Naive thymus-derived CD4-positive, alpha-beta T cell (primary cell): ENCODE measurements at regions of chr19 and their contacts with region 1.

Region 1: GRCh38 chr19:20776083-20777076 is at the start of gene ZNF66:
- DNase-seq: peak; percentile 84 to 96 (median 95)
- ATAC-seq: peak; percentile 99
- H3K4me3 ChIP-seq: peak within 1 kb of the TSS; percentile 99
- H3K4me3 Mint-ChIP-seq: peak within 1 kb of the TSS; percentile 92 to 100 (median 99)
- H3K27ac ChIP-seq: peak within 1 kb of the TSS; percentile 81
- H3K27ac Mint-ChIP-seq: peak within 1 kb of the TSS; percentile 86 to 97 (median 93)
- H3K4me1 ChIP-seq: peaks cover 0 to 5% of the 10 kb centered on the region in 2 donors
- H3K4me1 Mint-ChIP-seq: peaks cover 3 to 44% (median 31%) of the 10 kb centered on the region in 7 donors
- H3K27me3 ChIP-seq: no peaks in the 10 kb centered on the region
- H3K27me3 Mint-ChIP-seq: no peaks in the 10 kb centered on the region
- total RNA-seq, gene ZNF66: 7.6 to 18.5 (median 12.2) TPM

Region 2: DNA sequence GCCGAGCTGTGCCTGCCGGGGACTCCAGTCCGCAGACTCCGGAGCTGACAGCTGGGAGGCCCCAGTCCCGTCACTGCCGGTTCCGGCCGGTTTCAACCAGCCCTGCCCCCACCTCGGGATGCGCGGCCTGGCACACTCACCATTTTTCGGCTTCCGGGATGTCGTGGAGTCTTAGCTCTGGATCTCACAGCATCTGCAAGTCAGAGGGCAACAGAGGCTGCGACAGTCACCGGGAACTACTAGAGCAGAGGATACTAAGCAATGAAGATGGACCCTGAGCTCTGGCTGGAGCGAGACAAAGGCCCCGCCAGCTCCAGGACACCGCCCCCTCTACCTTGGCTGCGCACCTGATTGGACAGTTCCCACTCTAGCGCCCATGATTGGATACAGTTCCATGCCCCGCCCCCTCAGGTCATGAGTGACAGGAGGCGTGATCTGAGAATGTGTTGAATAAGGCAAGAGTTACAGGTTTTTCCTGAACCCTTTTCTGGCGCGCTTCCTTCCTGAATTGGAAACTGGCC is 737.1 kb before region 1 on chr19 and contains the start of gene ZNF682:
- CTCF ChIA-PET with region 1: no interaction called
- POLR2A ChIA-PET with region 1: no interaction called
- intact Hi-C with region 1: loop called in 1 of 2 experiments (anchors 1 kb)
- DNase-seq: peak; percentile 83 to 96 (median 94)
- ATAC-seq: peak; percentile 100
- H3K4me3 ChIP-seq: peak within 1 kb of the TSS; percentile 90
- H3K4me3 Mint-ChIP-seq: peak within 1 kb of the TSS; percentile 92 to 99 (median 96)
- H3K27ac ChIP-seq: peak within 1 kb of the TSS; percentile 81
- H3K27ac Mint-ChIP-seq: peak within 1 kb of the TSS; percentile 86 to 98 (median 94)
- H3K4me1 ChIP-seq: no peaks in the 10 kb centered on the region
- H3K4me1 Mint-ChIP-seq: peaks cover 5 to 27% (median 25%) of the 10 kb centered on the region in 7 donors
- H3K27me3 ChIP-seq: no peaks in the 10 kb centered on the region
- H3K27me3 Mint-ChIP-seq: peaks cover 0 to 5% (median 0%) of the 10 kb centered on the region in 5 donors
- total RNA-seq, gene ZNF682: 5.3 to 13.0 (median 9.5) TPM

Region 3: GRCh38 chr19:20237761-20238623 is 538.4 kb before region 1 on chr19:
- CTCF ChIA-PET with region 1: no interaction called
- POLR2A ChIA-PET with region 1: no interaction called
- intact Hi-C with region 1: loop called in 1 of 2 experiments (anchors 5 kb)
- DNase-seq: peak; percentile 70 to 90 (median 83)
- ATAC-seq: peak; percentile 97
- H3K4me3 ChIP-seq: peak overlapping the region; percentile 71
- H3K4me3 Mint-ChIP-seq: peak overlapping the region; percentile 83 to 98 (median 96)
- H3K27ac ChIP-seq: peak overlapping the region; percentile 63
- H3K27ac Mint-ChIP-seq: peak overlapping the region; percentile 55 to 95 (median 87)
- H3K4me1 ChIP-seq: peaks cover 0 to 4% of the 10 kb centered on the region in 2 donors
- H3K4me1 Mint-ChIP-seq: peaks cover 5 to 12% (median 10%) of the 10 kb centered on the region in 7 donors
- H3K27me3 ChIP-seq: no peaks in the 10 kb centered on the region
- H3K27me3 Mint-ChIP-seq: no peaks in the 10 kb centered on the region

Region 4: GRCh38 chr19:20661150-20661819 is 115.1 kb before region 1 on chr19 and contains the start of gene ZNF626:
- CTCF ChIA-PET with region 1: no interaction called
- POLR2A ChIA-PET with region 1: interaction called, 7 read pairs
- intact Hi-C with region 1: loop called in 1 of 2 experiments (anchors 1 kb)
- DNase-seq: peak; percentile 66 to 92 (median 87)
- ATAC-seq: peak; percentile 99
- H3K4me3 ChIP-seq: peak within 1 kb of the TSS; percentile 89
- H3K4me3 Mint-ChIP-seq: peak within 1 kb of the TSS; percentile 83 to 97 (median 92)
- H3K27ac ChIP-seq: peak within 1 kb of the TSS; percentile 91
- H3K27ac Mint-ChIP-seq: peak within 1 kb of the TSS; percentile 86 to 97 (median 95)
- H3K4me1 ChIP-seq: peaks cover 0 to 6% of the 10 kb centered on the region in 2 donors
- H3K4me1 Mint-ChIP-seq: peaks cover 0 to 54% (median 47%) of the 10 kb centered on the region in 7 donors
- H3K27me3 ChIP-seq: no peaks in the 10 kb centered on the region
- H3K27me3 Mint-ChIP-seq: no peaks in the 10 kb centered on the region
- total RNA-seq, gene ZNF626: 2.2 to 20.0 (median 12.4) TPM

Region 5: DNA sequence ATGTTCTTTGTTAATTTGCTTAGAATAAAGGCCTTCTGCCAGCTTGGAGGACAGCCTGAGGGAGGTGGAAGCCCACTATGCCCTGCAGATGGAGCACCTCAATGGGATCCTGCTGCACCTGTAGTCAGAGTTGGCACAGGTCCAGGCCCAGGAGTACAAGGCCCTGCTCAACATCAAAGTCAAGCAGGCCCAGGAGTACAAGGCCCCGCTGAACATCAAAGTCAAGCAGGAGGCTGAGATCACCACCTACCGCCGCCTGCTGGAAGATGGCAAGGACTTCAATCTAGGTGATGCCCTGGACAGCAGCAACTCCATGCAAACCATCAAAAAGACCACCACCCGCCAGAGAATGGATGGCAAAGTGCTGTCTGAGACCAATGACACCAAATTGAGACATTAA is 188.4 kb after region 1 on chr19:
- CTCF ChIA-PET with region 1: no interaction called
- POLR2A ChIA-PET with region 1: no interaction called
- intact Hi-C with region 1: no loop called
- DNase-seq: peak in 1 of 9 donors; percentile 0
- ATAC-seq: no peak
- H3K4me3 ChIP-seq: no peak overlapping the region
- H3K4me3 Mint-ChIP-seq: no peak overlapping the region
- H3K27ac ChIP-seq: no peak overlapping the region
- H3K27ac Mint-ChIP-seq: no peak overlapping the region
- H3K4me1 ChIP-seq: no peaks in the 10 kb centered on the region
- H3K4me1 Mint-ChIP-seq: no peaks in the 10 kb centered on the region
- H3K27me3 ChIP-seq: no peaks in the 10 kb centered on the region
- H3K27me3 Mint-ChIP-seq: peaks cover 0 to 10% (median 5%) of the 10 kb centered on the region in 5 donors

Region 6: DNA sequence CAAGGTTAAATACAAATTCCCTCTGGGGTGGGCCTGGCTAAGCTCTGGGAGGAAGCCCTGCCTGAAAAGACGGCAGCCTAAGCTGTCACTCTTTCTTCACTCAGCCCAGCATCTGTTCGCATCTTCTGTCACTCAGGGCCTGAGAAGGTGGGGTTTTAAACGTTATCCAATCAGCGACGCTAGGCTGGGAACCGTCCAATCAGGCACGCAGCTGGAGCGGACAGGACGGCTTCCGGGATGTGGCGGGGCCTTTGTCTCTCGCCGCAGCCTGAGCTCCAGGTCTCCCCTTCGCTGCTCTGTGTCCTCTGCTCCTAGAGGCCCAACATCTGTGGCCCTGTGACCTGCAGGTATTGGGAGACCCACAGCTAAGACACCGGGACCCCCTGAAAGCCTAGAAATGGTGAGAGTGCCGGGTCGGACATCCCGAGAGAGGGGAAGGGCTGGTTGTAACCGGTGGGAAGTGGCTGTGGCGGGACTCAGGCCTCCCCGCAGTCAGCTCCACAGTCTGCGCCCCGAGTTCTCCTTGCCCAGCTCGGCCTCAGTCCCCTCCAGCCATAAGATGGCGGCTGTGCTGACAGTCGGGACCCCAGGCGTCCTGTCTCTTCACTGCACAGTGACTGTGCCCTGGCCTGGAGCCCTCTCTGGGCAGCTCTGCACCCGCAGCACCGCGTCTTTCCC is 365.5 kb after region 1 on chr19 and contains the start of gene ZNF431:
- CTCF ChIA-PET with region 1: no interaction called
- POLR2A ChIA-PET with region 1: interaction called, 6 read pairs
- intact Hi-C with region 1: loop called (anchors 1 to 5 kb)
- DNase-seq: peak; percentile 63 to 95 (median 91)
- ATAC-seq: peak; percentile 100
- H3K4me3 ChIP-seq: peak within 1 kb of the TSS; percentile 94
- H3K4me3 Mint-ChIP-seq: peak within 1 kb of the TSS; percentile 95 to 98 (median 97)
- H3K27ac ChIP-seq: peak within 1 kb of the TSS; percentile 91
- H3K27ac Mint-ChIP-seq: peak within 1 kb of the TSS; percentile 93 to 99 (median 96)
- H3K4me1 ChIP-seq: peaks cover 3 to 6% of the 10 kb centered on the region in 2 donors
- H3K4me1 Mint-ChIP-seq: peaks cover 20 to 69% (median 54%) of the 10 kb centered on the region in 7 donors
- H3K27me3 ChIP-seq: no peaks in the 10 kb centered on the region
- H3K27me3 Mint-ChIP-seq: no peaks in the 10 kb centered on the region
- total RNA-seq, gene ZNF431: 19.1 to 36.8 (median 25.4) TPM

Region 7: GRCh38 chr19:21767065-21767800 is 990.9 kb after region 1 on chr19 and contains the start of gene ZNF100:
- CTCF ChIA-PET with region 1: no interaction called
- POLR2A ChIA-PET with region 1: interaction called, 3 read pairs
- intact Hi-C with region 1: loop called in 1 of 2 experiments (anchors 1 kb)
- DNase-seq: peak; percentile 64 to 88 (median 80)
- ATAC-seq: peak; percentile 98
- H3K4me3 ChIP-seq: peak within 1 kb of the TSS; percentile 97
- H3K4me3 Mint-ChIP-seq: peak within 1 kb of the TSS; percentile 92 to 98 (median 97)
- H3K27ac ChIP-seq: peak within 1 kb of the TSS; percentile 81
- H3K27ac Mint-ChIP-seq: peak within 1 kb of the TSS; percentile 89 to 98 (median 92)
- H3K4me1 ChIP-seq: no peaks in the 10 kb centered on the region
- H3K4me1 Mint-ChIP-seq: peaks cover 7 to 43% (median 27%) of the 10 kb centered on the region in 7 donors
- H3K27me3 ChIP-seq: no peaks in the 10 kb centered on the region
- H3K27me3 Mint-ChIP-seq: no peaks in the 10 kb centered on the region
- total RNA-seq, gene ZNF100: 9.5 to 22.5 (median 18.4) TPM

Region 8: DNA sequence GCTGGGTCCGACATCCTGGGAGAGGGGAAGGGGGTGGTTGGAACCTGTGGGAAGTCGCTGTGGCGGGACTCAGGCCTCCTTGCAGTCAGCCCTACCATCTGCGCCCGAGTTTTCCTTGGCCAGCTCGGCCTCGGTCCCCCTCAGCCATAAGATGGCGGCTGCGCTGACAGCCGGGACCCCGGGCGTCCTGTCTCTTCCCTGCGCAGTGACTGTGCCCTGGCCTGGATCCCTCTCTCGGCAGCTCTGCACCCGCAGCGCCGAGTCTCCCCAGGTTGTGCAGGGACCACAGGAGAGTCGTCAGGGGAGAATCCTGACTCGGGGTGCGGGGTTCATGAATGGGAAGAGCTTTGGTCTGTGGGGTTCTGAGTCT is 1276.2 kb after region 1 on chr19:
- CTCF ChIA-PET with region 1: no interaction called
- POLR2A ChIA-PET with region 1: interaction called, 11 read pairs
- intact Hi-C with region 1: no loop called
- DNase-seq: no peak
- ATAC-seq: peak; percentile 44
- H3K4me3 ChIP-seq: peak overlapping the region; percentile 76
- H3K4me3 Mint-ChIP-seq: peak overlapping the region; percentile 89 to 96 (median 94)
- H3K27ac ChIP-seq: peak overlapping the region; percentile 72
- H3K27ac Mint-ChIP-seq: peak overlapping the region; percentile 65 to 92 (median 88)
- H3K4me1 ChIP-seq: no peaks in the 10 kb centered on the region
- H3K4me1 Mint-ChIP-seq: peaks cover 0 to 14% (median 0%) of the 10 kb centered on the region in 7 donors
- H3K27me3 ChIP-seq: no peaks in the 10 kb centered on the region
- H3K27me3 Mint-ChIP-seq: no peaks in the 10 kb centered on the region